PC-3 (cell line): ENCODE measurements at regions of chr2 and their contacts with region 1.

Region 1: GRCh38 chr2:160353166-160353565 is 140.4 kb downstream of the RBMS1 start:
- DNase-seq: peak; percentile 49
- ATAC-seq: peak; percentile 27; the same call in 1 of the 2 replicates
- H3K4me3 ChIP-seq: no peak overlapping the region
- H3K27ac ChIP-seq: peak overlapping the region; percentile 21; the same call in 1 of the 2 replicates
- H3K4me1 ChIP-seq: peaks cover 53% of the 10 kb centered on the region
- H3K27me3 ChIP-seq: no peaks in the 10 kb centered on the region
- CTCF ChIP-seq: peak; percentile 63

Region 2: DNA sequence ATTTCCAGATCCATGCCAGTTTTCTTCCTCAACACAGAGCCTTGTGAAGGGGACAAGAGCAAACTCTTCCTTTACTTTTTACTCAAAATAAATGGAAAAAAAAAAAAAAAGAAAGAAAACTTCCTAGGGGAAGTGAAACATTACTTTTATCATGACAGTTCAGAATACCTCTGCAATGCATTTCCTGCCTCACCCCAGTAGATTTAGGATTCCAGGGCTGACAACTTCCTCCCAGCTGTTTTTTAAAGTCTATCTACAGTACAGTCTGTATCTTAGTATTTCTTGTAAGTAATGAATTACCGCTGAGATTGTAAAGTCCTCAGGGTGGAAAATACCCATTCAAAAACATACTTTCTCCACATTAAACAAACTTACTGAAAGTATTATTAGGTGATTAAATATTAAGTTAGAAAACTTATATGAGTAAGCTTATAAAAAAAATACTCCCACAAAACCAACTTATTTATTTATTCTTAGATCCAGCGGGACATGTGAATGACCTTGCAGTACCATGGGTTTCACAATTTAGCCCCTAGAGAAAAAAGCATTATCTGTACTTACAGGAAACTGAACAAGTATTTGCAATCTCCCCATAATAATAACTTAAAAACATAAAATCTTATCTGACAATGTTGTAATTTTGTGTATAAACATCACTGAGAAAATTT is 22.8 kb after region 1 on chr2:
- CTCF ChIA-PET with region 1: no interaction called
- POLR2A ChIA-PET with region 1: no interaction called
- intact Hi-C with region 1: loop called (anchors 2 kb)
- DNase-seq: peak; percentile 49
- ATAC-seq: peak; percentile 78
- H3K4me3 ChIP-seq: no peak overlapping the region
- H3K27ac ChIP-seq: peak overlapping the region; percentile 35
- H3K4me1 ChIP-seq: peaks cover 21% of the 10 kb centered on the region
- H3K27me3 ChIP-seq: no peaks in the 10 kb centered on the region
- CTCF ChIP-seq: no peak

Region 3: GRCh38 chr2:160406591-160407392 is 53.6 kb after region 1 on chr2:
- CTCF ChIA-PET with region 1: no interaction called
- POLR2A ChIA-PET with region 1: no interaction called
- intact Hi-C with region 1: loop called (anchors 5 kb)
- DNase-seq: peak; percentile 63
- ATAC-seq: peak; percentile 45
- H3K4me3 ChIP-seq: peak overlapping the region; percentile 77
- H3K27ac ChIP-seq: peak overlapping the region; percentile 70
- H3K4me1 ChIP-seq: peaks cover 66% of the 10 kb centered on the region
- H3K27me3 ChIP-seq: no peaks in the 10 kb centered on the region
- CTCF ChIP-seq: no peak; the same call in 1 of the 2 replicates

Region 4: DNA sequence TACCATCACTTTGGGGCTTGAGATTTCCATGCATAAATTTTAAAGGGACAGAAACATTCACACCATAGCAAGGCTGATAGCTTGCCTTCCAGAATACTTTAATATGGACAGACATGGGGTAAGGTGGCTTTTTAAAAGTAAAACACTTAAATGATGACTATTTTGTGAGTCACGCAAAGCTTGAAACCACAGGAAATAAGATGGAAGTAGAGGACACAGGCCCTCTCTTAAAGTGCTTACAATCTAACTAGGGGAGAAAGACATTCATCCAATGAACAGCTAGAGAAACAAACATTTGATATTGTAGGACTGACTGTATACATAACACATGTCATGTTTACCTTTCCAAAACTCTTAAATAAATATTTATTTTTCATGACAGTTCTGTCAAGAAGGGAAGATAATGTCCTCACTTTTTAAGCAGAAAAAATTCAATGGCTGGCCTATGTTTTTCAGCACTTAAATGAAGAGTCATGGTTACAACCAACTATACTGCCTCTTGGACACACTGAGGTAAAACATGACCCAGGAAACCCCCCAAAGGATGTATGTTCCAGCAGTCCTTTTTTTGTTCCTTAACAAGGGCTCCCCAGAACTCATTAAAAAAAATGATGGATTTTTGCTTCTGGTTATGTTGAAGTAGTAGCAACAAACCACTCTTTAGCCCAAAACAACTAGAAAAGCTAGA is 260.4 kb after region 1 on chr2:
- CTCF ChIA-PET with region 1: no interaction called
- POLR2A ChIA-PET with region 1: no interaction called
- intact Hi-C with region 1: loop called (anchors 10 kb)
- DNase-seq: peak; percentile 96
- ATAC-seq: peak; percentile 93
- H3K4me3 ChIP-seq: no peak overlapping the region
- H3K27ac ChIP-seq: peak overlapping the region; percentile 61
- H3K4me1 ChIP-seq: peaks cover 20% of the 10 kb centered on the region
- H3K27me3 ChIP-seq: no peaks in the 10 kb centered on the region
- CTCF ChIP-seq: no peak

Region 5: DNA sequence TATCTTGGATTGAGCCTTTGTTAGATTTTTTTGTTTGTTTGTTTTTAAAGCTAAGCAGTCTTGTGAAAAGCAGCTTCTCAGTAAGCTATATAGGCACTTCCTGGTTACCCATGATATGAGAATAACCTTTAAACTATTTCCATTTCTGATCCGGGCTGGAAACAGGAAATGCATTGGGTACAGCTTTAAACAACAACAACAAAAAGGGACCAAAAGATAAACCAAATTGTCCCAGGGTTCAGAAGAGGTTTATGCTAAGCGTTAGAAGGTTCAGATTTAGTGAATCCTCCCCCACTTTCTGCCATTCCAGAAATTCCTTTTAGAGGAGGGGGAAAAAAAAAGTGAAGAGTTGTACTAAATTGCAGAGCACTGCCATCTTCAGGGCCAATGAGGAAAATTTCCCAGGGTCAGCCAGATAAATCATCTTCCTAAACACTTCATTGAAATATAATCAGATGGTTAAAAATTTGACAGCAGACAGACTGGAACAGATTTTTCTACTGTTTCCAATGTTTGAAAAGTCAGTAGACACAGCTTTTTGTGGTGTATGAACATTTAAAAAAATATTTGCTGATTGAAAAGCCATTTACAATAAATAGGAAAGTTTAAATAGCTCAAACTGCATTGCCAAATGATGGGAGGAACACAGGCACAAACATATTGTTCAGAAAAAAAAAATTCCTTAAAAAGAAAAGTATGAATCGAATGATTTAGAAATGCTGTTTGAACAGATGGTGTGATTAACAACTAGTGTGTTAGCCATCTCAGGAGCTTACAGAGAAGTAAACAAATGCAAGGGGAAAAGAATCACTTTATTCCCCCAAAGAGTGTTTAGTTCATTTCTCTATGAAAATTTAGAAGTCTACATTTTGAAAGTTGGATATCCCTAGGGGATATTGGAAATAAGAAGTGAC is 617.1 kb after region 1 on chr2:
- CTCF ChIA-PET with region 1: interaction called, 6 read pairs
- POLR2A ChIA-PET with region 1: no interaction called
- intact Hi-C with region 1: loop called (anchors 1 kb)
- DNase-seq: peak; percentile 87
- ATAC-seq: peak; percentile 70
- H3K4me3 ChIP-seq: peak overlapping the region; percentile 26; the same call in 1 of the 2 replicates
- H3K27ac ChIP-seq: peak overlapping the region; percentile 65
- H3K4me1 ChIP-seq: peaks cover 11% of the 10 kb centered on the region
- H3K27me3 ChIP-seq: no peaks in the 10 kb centered on the region
- CTCF ChIP-seq: peak; percentile 94